Head of caudate nucleus (tissue), 42 donors: ENCODE measurements at regions of chr21 and their contacts with region 1.

Region 1: DNA sequence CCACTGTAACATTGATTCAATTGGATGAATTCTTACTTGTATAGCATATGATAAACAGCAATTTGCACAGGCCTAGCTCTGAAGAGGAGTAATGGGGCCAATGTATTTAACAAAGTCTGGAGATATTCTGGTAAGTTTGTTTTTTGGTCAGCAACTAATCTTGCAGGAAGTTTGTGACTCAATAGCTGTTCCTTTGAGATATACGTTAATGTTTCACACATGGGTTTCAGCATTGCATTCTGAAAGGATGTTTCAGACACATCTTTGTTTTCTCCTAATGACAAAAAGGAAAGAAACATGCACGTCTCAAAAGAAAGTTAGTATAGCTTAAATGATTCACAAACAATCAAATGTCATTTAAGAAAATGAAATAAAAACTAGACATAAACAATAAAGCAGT is 49.0 kb downstream of the LTN1 start:
- DNase-seq: no peak

Region 2: DNA sequence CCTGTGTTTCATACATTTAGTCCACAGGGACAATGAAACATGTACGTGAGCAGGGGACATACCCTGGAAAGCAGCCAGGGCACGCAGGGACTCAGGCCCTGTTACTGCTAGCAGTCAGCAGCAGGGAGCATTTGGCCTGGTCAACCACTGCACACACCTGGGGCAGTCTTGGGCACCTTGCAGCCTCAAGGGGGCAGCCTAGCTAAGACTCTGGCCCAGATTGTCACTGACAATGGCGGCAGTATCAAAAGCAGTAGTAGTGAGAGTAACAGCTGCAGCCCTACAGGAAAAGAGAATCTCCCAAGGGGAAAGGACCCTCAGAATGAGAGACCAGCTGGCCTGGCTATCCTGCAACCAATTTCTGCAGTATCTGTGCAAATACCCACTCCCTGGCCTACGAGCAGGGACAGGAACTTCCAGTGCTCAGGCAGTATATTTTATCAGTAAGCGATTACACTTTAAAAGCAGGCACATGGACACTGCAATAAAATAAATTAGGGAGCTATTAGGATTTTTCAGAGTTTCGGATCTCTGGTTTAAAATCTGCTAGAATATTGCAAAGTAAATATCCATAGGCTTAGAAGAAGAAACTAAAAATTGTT is 426.5 kb before region 1 on chr21:
- intact Hi-C with region 1: loop called (anchors 10 kb)
- DNase-seq: peak; percentile 25 to 79 (median 52)

Region 3: DNA sequence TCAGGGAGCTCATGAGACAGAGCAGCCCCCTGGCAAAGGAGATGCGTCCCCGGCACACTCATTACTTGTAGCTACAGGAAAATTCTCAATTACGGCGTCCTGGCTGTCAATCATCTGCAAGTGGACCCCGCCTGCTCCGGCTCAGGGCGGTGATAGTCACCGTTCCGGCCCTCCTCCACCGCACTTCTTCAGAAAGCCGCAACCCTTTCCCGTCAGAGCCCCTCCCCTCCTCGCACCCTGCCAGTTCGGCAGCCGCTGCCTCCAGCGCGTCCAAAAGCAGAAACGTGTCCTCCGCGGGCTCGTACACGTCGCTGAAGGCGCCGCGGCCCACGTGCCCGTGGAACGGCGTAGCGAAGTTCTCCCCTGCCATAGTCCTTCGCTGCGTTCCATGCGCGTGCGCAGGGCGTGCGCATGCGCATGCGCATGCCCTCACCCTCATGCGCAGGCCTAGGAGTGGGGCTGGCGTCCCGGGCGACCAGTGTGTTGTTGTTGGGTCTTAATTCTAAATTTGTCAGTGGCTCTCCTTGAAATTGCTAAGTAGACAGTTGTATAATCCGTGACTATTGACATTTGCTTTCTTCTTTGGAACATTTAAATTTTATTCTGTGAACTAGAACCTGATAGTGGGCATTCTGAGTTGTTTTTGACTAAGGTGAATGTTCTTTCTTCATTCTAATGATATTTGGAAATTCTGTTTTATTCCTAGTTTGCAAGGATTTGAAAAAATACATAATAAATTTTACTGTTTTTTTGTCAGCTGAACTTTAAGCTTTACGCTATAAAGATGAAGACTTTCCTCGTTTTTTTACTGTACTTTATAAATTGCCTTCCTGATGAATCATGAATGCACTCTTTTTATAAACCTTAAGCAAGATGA is 58.4 kb before region 1 on chr21:
- intact Hi-C with region 1: loop called (anchors 10 kb)
- DNase-seq: peak; percentile 72 to 94 (median 88)